ENCODE measurements at regions of chr12 and their contacts with region 1.

Region 1: DNA sequence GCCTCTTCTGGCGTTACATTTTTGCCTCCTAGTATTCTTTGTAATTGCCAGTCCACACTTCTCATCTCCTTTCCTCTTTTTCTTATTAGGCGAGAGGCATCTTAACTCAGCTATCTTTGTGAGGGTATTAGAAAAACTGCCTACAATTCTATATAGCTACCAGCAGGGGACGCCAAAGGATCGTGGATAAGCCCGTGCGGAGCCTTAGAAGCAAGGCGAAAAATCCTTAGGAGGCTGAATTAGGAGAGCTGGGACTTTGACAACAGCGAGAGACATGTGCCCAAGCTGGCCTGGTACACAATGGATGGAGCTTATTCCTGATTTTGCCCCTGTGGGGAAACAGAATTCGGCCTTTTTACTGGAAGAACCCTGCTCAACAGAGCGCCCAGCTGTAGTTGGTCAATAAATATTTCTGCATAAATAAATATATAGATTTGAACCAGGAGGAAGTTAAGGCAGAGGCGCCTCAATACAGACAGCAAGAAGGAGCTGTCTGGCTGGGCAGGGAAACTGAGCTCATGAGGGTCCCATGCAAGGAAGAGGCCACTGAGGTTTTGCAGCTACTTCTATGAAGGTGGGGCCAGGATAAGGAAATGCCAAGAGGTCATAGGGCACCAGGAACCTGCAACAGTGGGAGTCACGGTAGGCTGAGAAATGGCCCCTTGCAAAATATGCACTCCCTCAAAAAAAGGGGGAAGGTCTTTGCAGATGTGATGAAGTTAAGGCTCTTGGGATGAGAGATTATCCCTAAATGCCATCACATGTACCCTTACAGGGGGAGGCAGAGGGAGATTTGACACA is 14.6 kb upstream of the RBM19 start:
- DNase-seq: peak; percentile 26
- H3K4me3 ChIP-seq: no peak overlapping the region
- CTCF ChIP-seq: peak; percentile 86

Region 2: GRCh38 chr12:113955109-113955970 is 25.4 kb before region 1 on chr12:
- CTCF ChIA-PET with region 1: no interaction called
- POLR2A ChIA-PET with region 1: no interaction called
- DNase-seq: no peak
- H3K4me3 ChIP-seq: no peak overlapping the region
- CTCF ChIP-seq: peak; percentile 61

Region 3: GRCh38 chr12:113965951-113966797 is 14.6 kb before region 1 on chr12 and contains the start of gene RBM19:
- CTCF ChIA-PET with region 1: interaction called, 50 read pairs
- POLR2A ChIA-PET with region 1: no interaction called
- DNase-seq: peak; percentile 81
- H3K4me3 ChIP-seq: peak within 1 kb of the TSS; percentile 83
- CTCF ChIP-seq: peak; percentile 94

Region 4: DNA sequence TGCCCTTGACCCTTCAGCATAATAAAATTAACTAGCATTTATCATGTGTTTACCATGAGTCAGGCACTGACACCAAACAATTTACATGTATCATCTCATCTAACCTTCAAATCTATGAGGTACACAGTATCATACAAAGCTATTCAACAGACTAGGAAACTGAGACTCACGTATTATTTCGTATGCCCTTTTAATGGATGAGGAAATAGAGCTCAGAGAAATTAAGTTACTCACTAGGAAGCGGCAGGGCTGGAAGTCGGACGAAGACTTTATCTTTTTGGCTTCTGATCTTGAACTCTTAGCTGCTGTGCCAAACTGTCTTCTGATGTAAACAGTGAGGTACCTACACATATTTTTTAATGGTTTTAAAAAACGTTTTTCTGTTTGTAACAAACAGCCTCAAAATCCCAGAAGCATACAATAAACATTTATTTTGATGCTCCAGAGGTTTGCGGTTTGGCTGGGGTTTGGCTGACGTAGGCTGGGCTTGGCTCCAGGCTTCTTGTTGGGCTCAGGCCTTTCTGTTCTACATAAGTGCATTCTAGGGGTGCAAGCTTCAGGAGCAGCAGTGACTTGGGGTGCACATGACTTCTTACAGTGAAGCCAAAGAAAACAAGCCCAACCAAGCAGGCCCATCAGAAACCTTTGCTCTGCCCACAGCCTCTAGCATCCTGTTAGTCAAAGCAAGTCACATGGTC is 240.5 kb after region 1 on chr12:
- CTCF ChIA-PET with region 1: no interaction called
- POLR2A ChIA-PET with region 1: no interaction called
- DNase-seq: no peak
- H3K4me3 ChIP-seq: no peak overlapping the region
- CTCF ChIP-seq: no peak

Region 5: DNA sequence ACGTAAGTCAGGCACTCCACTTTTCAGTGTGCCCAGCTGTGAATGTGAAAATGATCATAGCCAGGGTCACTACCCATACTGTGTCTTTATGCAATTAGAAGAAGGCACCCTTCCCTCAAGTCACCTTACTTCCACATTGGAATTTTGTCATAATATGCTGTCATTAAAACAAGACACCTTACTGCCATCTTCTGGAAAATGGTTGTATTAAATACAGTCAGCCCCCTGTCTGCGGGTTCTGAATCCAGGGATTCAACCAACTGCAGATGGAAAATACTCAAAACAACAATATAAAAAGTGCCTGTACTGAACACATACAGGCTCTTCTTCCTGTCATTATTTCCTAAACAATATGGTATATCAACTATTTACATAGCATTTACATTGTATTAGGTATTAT is 495.4 kb after region 1 on chr12:
- CTCF ChIA-PET with region 1: interaction called, 14 read pairs
- POLR2A ChIA-PET with region 1: no interaction called
- DNase-seq: no peak
- H3K4me3 ChIP-seq: no peak overlapping the region
- CTCF ChIP-seq: no peak

Region 6: DNA sequence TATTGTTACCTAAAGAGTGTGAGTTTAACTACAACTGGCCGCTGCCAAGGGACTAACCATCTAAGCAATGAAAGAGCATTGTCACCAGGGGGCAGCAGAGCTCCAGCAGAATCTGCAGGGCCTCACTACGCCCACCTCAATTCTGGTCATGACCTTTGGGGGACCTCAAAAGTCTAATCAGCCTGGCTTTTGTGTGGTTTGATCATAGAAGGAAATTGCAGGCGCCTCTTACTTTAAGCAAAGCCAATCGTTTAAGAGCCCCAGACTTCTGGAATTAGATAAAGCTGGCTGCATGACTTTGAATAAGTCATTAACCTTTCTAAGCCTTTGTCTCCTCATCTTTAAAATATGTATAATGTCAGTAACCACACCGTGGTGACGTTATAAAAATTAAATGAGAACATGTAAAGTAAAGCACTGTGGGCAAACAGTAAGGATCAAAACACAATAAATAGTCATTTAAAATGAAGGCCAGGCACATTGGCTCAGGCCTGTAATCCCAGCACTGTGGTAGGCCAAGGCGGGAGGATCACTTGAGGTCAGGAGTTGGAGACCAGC is 644.6 kb after region 1 on chr12:
- CTCF ChIA-PET with region 1: interaction called, 13 read pairs
- POLR2A ChIA-PET with region 1: no interaction called
- DNase-seq: no peak
- H3K4me3 ChIP-seq: no peak overlapping the region
- CTCF ChIP-seq: peak; percentile 84

Region 7: GRCh38 chr12:115916910-115917668 is 1936.4 kb after region 1 on chr12:
- CTCF ChIA-PET with region 1: interaction called, 15 read pairs
- POLR2A ChIA-PET with region 1: no interaction called
- DNase-seq: no peak
- H3K4me3 ChIP-seq: no peak overlapping the region
- CTCF ChIP-seq: peak; percentile 92